ENCODE measurements at regions of chr9 and their contacts with region 1.

Region 1: GRCh38 chr9:103458826-103459225 is 463.7 kb downstream of the CYLC2 start:
- DNase-seq: no peak
- H3K4me3 ChIP-seq: no peak overlapping the region
- H3K4me3 Mint-ChIP-seq: no peak overlapping the region
- H3K27ac Mint-ChIP-seq: no peak overlapping the region
- H3K4me1 ChIP-seq: no peaks in the 10 kb centered on the region
- H3K4me1 Mint-ChIP-seq: no peaks in the 10 kb centered on the region
- H3K27me3 ChIP-seq: no peaks in the 10 kb centered on the region
- H3K27me3 Mint-ChIP-seq: no peaks in the 10 kb centered on the region
- CTCF ChIP-seq: no peak

Region 2: DNA sequence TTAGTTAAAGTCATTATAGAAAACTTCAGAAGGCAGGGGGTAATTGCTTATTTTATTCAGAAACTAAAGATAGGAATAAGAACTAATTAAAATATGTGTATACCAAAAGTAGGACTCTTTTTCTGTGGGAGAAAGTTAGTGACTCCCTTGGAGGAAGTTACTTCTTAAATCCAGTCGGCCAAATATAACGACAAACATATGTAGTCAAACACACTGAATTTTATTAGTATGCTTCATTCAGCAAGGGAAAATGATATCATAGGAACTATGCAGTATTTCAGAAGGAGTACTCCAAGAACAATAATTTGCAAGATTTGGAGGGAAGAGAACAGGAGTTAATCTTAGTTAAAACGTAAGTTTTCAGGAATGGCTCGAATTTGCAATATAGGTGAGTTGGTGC is 31.1 kb before region 1 on chr9:
- CTCF ChIA-PET with region 1: no interaction called
- POLR2A ChIA-PET with region 1: no interaction called
- intact Hi-C with region 1: no loop called
- DNase-seq: no peak
- H3K4me3 ChIP-seq: no peak overlapping the region
- H3K4me3 Mint-ChIP-seq: no peak overlapping the region
- H3K27ac Mint-ChIP-seq: no peak overlapping the region
- H3K4me1 ChIP-seq: no peaks in the 10 kb centered on the region
- H3K4me1 Mint-ChIP-seq: no peaks in the 10 kb centered on the region
- H3K27me3 ChIP-seq: no peaks in the 10 kb centered on the region
- H3K27me3 Mint-ChIP-seq: no peaks in the 10 kb centered on the region
- CTCF ChIP-seq: no peak

Region 3: DNA sequence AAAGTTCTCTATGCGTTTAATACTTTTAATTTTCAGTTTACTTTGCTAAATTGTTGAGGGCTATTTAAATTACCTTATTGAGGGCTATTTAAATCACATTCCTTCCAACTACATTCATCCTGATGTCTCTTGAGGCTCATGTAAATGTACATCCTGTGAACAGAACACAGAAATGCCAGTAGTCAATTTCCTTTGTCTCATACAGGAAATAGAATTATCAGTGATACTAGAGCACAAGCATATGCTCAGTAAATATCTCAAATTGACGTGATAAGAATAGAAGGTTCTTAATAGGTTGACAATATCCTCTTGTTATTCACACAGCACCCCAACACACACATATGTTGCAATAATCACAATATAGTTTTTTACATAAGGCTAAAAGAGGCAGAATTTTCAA is 14.7 kb before region 1 on chr9:
- CTCF ChIA-PET with region 1: no interaction called
- POLR2A ChIA-PET with region 1: no interaction called
- intact Hi-C with region 1: no loop called
- DNase-seq: no peak
- H3K4me3 ChIP-seq: no peak overlapping the region
- H3K4me3 Mint-ChIP-seq: no peak overlapping the region
- H3K27ac Mint-ChIP-seq: no peak overlapping the region
- H3K4me1 ChIP-seq: no peaks in the 10 kb centered on the region
- H3K4me1 Mint-ChIP-seq: no peaks in the 10 kb centered on the region
- H3K27me3 ChIP-seq: no peaks in the 10 kb centered on the region
- H3K27me3 Mint-ChIP-seq: no peaks in the 10 kb centered on the region
- CTCF ChIP-seq: no peak

Region 4: DNA sequence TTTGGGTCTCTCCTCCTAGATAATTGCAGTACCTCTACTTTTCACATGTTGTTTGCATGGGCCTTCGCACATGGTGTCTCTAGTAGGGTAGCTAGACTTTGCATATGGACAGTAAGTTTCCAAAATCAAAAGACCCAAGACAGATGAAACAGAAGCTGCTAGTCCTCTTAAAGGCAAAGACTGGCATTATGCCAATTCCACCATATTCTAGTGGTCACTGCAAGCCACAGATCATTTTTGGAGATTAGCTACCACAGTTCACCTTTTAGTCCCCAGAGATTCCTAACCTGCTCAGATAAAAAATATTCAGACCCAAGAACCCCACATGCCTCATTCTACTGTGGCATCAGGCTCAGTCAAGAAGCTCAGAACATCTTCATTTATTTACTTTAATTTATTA is 43.2 kb after region 1 on chr9:
- CTCF ChIA-PET with region 1: no interaction called
- POLR2A ChIA-PET with region 1: no interaction called
- intact Hi-C with region 1: loop called (anchors 10 kb)
- DNase-seq: no peak
- H3K4me3 ChIP-seq: no peak overlapping the region
- H3K4me3 Mint-ChIP-seq: no peak overlapping the region
- H3K27ac Mint-ChIP-seq: no peak overlapping the region
- H3K4me1 ChIP-seq: no peaks in the 10 kb centered on the region
- H3K4me1 Mint-ChIP-seq: no peaks in the 10 kb centered on the region
- H3K27me3 ChIP-seq: no peaks in the 10 kb centered on the region
- H3K27me3 Mint-ChIP-seq: no peaks in the 10 kb centered on the region
- CTCF ChIP-seq: no peak

Measured in Caco-2 (cell line).